CD8-positive, alpha-beta T cell (primary cell): ENCODE measurements at regions of chr7 and their contacts with region 1.

Region 1: GRCh38 chr7:52088008-52088901 is 771.6 kb upstream of the COBL start:
- DNase-seq: no peak
- ATAC-seq: no peak
- H3K4me3 ChIP-seq: no peak overlapping the region
- H3K4me3 Mint-ChIP-seq: no peak overlapping the region
- H3K27ac ChIP-seq: no peak overlapping the region
- H3K27ac Mint-ChIP-seq: no peak overlapping the region
- H3K4me1 ChIP-seq: no peaks in the 10 kb centered on the region
- H3K4me1 Mint-ChIP-seq: no peaks in the 10 kb centered on the region
- H3K27me3 ChIP-seq: no peaks in the 10 kb centered on the region
- H3K27me3 Mint-ChIP-seq: peaks cover 4% of the 10 kb centered on the region
- CTCF ChIP-seq: no peak

Region 2: DNA sequence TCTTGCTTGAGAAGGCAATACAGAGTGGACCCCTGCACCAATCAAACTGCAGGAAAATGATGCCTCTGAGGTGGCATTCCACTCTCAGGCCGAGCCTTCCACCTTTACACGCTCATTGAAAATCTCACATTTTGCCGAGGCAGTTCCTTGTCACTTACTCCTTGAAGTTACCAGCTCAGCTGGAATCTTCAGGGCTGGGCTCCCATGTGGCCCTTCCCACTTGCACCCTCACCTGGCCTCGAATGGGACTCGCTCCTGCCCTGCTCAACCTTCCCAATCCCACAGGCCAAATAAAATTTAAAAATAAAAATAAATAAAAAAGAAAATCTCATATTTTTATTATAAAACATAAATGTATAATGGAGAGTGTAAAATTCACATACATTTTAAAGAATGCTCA is 19.1 kb after region 1 on chr7:
- CTCF ChIA-PET with region 1: no interaction called
- POLR2A ChIA-PET with region 1: no interaction called
- intact Hi-C with region 1: loop called in 1 of 2 experiments (anchors 1 kb)
- DNase-seq: no peak
- ATAC-seq: no peak
- H3K4me3 ChIP-seq: no peak overlapping the region
- H3K4me3 Mint-ChIP-seq: no peak overlapping the region
- H3K27ac ChIP-seq: no peak overlapping the region
- H3K27ac Mint-ChIP-seq: no peak overlapping the region
- H3K4me1 ChIP-seq: no peaks in the 10 kb centered on the region
- H3K4me1 Mint-ChIP-seq: no peaks in the 10 kb centered on the region
- H3K27me3 ChIP-seq: no peaks in the 10 kb centered on the region
- H3K27me3 Mint-ChIP-seq: no peaks in the 10 kb centered on the region
- CTCF ChIP-seq: no peak